OCI-LY7 (cell line): ENCODE measurements at regions of chr5 and their contacts with region 1.

Region 1: GRCh38 chr5:717143-717542 is 24.0 kb upstream of the TPPP start:
- DNase-seq: no peak
- H3K4me3 ChIP-seq: no peak overlapping the region
- H3K27ac ChIP-seq: no peak overlapping the region
- H3K4me1 ChIP-seq: no peaks in the 10 kb centered on the region
- CTCF ChIP-seq: no peak

Region 2: DNA sequence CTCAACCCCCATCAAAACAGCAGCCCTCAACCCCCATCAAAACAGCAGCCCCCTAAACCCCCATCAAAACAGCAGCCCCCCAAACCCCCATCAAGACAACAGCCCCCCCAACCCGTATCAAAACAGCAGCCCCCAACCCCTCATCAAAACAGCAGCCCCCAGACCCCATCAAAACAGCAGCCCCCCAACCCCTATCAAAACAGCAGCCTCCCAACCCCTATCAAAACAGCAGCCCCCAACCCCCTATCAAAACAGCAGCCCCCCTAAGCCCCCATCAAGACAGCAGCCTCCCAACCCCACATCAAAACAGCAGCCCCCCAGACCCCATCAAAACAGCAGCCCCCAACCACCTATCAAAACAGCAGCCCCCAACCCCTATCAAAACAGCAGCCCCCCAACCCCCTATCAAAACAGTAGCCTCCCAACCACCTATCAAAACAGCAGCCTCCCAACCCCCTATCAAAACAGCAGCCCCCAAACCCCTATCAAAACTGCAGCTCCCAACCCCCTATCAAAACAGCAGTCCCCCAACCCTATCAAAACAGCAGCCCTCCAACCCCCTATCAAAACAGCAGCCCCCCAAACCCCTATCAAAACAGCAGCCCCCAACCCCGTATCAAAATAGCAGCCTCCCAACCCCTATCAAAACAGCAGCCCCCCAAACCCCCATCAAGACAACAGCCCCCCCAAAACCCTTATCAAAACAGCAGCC is 25.2 kb before region 1 on chr5:
- CTCF ChIA-PET with region 1: no interaction called
- POLR2A ChIA-PET with region 1: no interaction called
- intact Hi-C with region 1: no loop called
- DNase-seq: no peak
- H3K4me3 ChIP-seq: no peak overlapping the region
- H3K27ac ChIP-seq: no peak overlapping the region
- H3K4me1 ChIP-seq: no peaks in the 10 kb centered on the region
- CTCF ChIP-seq: no peak

Region 3: DNA sequence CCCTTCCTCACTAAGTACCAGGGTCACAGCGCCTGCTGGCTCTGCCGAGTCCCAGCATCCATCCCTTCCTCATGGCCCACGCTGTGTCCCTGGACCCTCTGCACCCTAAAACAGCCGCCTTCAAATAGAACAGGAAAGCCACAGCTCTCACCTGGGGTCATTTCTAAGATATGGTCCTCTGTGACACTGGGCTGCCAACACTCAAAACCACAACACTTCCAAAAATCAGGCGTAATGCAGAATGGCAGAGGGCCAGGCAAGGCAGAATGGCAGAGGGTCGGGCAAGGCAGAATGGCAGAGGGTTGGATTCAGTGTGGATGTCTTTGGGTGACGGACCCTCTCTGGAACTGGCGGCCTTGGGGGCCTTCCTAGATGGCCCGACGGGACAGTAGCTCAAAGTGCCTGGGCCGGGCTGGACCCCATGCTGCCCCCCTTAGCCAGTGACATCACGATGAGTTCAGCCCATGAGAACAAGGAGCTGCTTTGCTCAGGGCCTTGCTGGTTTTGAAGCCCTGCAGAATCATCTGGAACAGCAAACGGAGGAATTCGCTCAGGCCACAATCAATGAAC is 32.0 kb after region 1 on chr5:
- CTCF ChIA-PET with region 1: no interaction called
- POLR2A ChIA-PET with region 1: no interaction called
- intact Hi-C with region 1: no loop called
- DNase-seq: no peak
- H3K4me3 ChIP-seq: no peak overlapping the region
- H3K27ac ChIP-seq: no peak overlapping the region
- H3K4me1 ChIP-seq: no peaks in the 10 kb centered on the region
- CTCF ChIP-seq: no peak

Region 4: DNA sequence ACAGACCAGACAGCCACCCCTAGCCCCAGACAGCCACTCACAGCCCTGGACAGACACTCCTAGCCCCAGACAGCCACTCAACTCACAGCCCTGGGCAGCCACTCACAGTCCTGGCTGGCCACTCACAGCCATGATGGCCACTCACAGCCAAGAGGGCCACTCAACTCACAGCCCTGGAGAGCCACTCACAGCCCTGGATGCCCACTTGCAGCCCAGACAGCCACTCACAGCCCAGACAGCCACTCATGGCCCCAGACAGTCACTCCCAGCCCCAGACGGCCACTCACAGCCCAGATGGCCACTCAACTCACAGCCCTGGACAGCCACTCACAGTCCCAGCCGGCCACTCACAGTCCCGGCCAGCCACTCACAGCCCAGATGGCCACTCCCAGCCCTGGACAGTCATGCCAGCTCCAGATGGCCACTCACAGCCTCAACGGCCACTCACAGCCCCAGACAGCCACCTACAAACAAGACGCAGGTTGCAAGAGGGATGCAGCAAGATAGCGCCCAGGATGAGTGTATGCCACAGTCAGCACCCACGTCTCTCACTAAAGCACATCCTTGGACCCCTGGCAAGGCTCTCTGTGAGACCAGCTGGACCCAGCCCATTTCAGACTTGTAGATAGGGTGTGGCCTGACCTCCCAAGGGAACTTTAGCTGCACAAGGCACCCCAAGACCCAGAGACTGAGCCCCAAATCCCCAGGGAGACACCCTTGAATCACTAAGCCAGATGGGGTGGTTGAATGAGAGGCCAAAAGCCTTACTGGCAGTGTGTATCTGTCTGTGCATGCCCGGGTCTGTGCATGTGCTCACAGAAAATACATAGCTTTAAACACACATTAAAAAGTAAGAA is 44.9 kb after region 1 on chr5:
- CTCF ChIA-PET with region 1: no interaction called
- POLR2A ChIA-PET with region 1: no interaction called
- intact Hi-C with region 1: no loop called
- DNase-seq: no peak
- H3K4me3 ChIP-seq: no peak overlapping the region
- H3K27ac ChIP-seq: no peak overlapping the region
- H3K4me1 ChIP-seq: no peaks in the 10 kb centered on the region
- CTCF ChIP-seq: no peak

Region 5: DNA sequence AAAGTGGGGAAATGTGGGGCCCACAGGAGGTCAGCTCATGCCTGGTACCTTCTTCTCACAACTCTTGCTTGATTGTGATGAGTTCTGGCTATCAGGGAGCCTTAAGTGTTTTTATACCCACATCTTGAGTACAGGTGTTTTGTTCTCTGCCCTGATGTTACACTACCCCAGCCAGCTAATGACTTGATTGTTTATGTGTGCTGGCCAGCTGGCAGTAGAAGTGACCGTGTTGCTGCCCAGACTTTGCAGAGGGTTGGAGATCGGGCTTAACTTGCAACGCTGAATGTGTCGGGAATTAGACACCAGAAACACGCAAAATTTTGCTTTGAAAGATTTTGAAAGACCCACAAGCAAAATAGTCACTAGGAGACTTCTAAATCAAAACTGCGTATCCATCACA is 84.3 kb after region 1 on chr5:
- CTCF ChIA-PET with region 1: no interaction called
- POLR2A ChIA-PET with region 1: no interaction called
- intact Hi-C with region 1: loop called (anchors 5 kb)
- DNase-seq: no peak
- H3K4me3 ChIP-seq: no peak overlapping the region
- H3K27ac ChIP-seq: no peak overlapping the region
- H3K4me1 ChIP-seq: no peaks in the 10 kb centered on the region
- CTCF ChIP-seq: no peak